ENCODE measurements at regions of chr11 and their contacts with region 1.

Region 1: DNA sequence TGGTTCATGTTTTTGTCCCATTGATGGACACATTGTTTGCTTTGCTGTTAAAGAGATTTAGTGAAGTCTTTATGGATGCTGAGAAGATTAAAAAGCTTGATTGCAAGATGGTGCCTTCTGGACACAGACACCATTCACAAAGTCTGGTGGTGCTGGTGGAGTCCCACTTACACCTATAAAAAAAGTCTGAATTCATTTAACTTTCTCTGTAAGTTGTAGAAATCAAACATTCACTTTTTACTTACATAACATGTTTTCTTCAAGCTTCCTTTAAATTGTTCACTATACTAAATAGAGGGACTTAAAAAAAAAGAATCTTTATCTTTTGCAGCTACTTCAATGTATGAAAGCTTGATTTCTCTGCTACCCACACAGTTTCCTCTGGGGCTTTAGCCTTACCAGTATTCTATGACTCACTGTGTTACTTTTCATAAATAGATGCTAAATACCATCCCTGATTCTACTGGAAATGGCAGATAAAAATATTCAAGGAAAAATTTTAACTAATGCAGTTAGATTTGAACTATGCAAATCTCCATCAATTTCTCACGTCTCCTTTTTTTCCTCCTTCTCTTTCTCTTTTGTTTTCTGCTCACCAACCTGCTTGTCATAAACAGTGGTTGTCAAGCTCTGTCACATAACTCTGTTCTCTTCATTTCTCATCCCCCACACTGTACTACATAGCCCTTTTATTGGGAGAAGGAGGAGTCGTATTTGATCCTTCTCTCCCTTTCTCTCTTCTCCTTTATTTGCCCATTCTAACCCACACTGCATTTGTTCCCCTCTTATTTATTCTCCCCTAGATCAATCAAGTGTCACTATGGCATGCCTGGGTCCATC is 89.7 kb downstream of the FAM76B start:
- DNase-seq: no peak
- ATAC-seq: peak; percentile 62
- H3K4me3 Mint-ChIP-seq: peak overlapping the region; percentile 81
- H3K27ac Mint-ChIP-seq: peak overlapping the region; percentile 91
- H3K4me1 Mint-ChIP-seq: peaks cover 48% of the 10 kb centered on the region
- H3K27me3 Mint-ChIP-seq: no peaks in the 10 kb centered on the region

Region 2: DNA sequence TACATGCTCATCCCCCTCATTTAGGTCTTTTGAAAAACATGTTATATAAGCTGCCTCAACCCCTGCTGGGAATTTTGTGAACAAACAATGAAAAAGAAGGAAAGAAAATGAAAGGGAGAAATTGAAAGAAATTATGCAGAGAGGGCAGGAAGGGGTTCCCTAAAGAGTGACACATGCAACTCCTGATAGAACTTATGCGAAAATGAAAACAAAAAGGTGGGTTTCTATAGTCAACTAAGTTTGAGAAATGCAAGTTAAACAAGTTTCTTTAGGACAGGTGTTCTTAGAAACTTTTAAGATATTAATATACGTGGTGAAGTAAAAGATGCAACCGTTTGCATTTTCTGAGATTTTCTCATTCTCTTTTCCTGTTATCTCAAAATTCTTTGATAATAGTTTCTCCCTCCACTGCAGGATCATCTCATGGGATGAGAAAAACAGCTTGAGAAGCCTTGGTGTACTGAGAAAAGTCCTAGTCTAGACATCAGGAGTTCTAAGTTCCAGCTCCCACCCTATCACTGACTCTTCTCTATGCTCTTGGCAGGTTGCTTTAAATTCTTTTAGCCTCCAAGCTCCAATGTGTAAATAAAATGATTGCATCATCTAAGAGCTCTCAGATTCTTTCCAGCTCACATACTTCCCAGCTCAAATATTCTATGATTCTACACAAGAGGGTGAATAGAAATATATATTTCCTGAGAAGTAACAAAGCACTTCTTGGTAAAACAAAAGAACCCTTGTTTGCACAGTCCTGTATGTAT is 19.5 kb before region 1 on chr11:
- POLR2A ChIA-PET with region 1: interaction called, 17 read pairs
- DNase-seq: no peak
- ATAC-seq: peak; percentile 15
- H3K4me3 Mint-ChIP-seq: peak overlapping the region; percentile 64
- H3K27ac Mint-ChIP-seq: peak overlapping the region; percentile 90
- H3K4me1 Mint-ChIP-seq: peaks cover 45% of the 10 kb centered on the region
- H3K27me3 Mint-ChIP-seq: no peaks in the 10 kb centered on the region